CD14-positive monocyte (primary cell): ENCODE measurements at regions of chr6 and their contacts with region 1.

Region 1: DNA sequence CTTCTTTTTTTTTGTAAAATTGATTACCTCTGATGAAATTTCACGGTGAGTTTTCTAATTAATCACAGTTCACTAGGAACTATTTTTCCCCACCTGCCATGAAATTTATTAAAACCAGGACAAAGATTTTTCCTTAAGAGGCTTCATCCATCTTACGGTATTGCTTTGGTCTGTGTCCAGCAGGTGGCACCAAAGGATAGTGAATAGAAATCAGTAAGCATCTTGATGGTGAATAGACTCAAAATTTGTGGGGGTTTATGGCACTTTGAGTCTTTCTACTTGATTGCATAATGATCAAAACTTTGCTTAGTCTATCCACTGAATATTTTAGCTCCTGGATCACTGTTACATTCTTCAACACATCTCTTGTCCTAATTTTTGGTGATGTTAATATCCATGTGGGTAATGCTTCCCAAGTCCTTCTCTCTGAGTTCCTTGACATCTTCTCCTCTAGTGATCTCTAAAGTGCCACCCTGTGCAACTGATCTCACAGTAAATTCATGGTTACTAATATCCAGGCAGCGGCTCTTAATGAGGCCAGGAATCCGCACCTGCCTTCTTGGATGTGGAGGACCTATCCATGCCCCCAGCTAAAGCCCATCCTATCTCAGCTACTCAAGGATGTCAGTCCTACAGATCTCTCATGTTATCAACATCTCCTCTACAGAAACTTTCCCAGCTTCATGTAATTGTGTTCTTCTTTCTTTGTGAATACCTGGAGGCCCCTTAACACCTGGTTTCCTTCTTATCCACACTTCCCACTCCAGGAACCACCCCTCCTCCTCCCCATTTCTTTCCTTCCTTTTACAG is 54.5 kb downstream of the STMND1 start:
- DNase-seq: peak; percentile 20 to 54 (median 40)
- H3K4me3 ChIP-seq: no peak overlapping the region
- H3K4me3 Mint-ChIP-seq: no peak overlapping the region
- H3K27ac ChIP-seq: no peak overlapping the region
- H3K27ac Mint-ChIP-seq: no peak overlapping the region
- H3K4me1 ChIP-seq: no peaks in the 10 kb centered on the region
- H3K4me1 Mint-ChIP-seq: no peaks in the 10 kb centered on the region
- H3K27me3 ChIP-seq: peaks cover 0 to 2% of the 10 kb centered on the region in 2 donors
- H3K27me3 Mint-ChIP-seq: peaks cover under 1 to 6% (median 4%) of the 10 kb centered on the region in 3 donors
- CTCF ChIP-seq: peak; percentile 86

Region 2: DNA sequence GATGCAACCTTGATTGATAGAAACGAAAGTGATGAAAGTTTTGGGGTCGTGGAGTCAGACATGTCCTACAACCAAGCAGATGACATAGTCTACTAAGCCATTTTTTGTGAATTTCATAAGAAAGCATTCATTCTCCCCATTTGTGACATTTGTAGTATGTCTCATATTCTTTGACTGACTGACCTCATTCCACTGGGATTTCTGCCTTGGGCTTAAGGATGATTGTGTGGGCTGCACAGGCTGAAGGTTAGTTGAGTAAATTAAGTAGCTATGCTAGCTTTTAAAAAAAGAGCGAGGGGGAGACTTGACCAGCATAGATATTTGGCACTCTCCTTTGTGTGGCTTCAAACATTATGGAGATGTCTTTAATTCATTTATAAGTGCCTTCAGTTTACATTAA is 25.5 kb before region 1 on chr6:
- intact Hi-C with region 1: no loop called
- DNase-seq: no peak
- H3K4me3 ChIP-seq: no peak overlapping the region
- H3K4me3 Mint-ChIP-seq: peak overlapping the region in 1 of 2 donors; percentile 68
- H3K27ac ChIP-seq: no peak overlapping the region
- H3K27ac Mint-ChIP-seq: no peak overlapping the region
- H3K4me1 ChIP-seq: no peaks in the 10 kb centered on the region
- H3K4me1 Mint-ChIP-seq: no peaks in the 10 kb centered on the region
- H3K27me3 ChIP-seq: no peaks in the 10 kb centered on the region
- H3K27me3 Mint-ChIP-seq: peaks cover 0 to 9% (median 8%) of the 10 kb centered on the region in 3 donors
- CTCF ChIP-seq: no peak

Region 3: GRCh38 chr6:17193106-17193775 is 36.9 kb after region 1 on chr6:
- intact Hi-C with region 1: no loop called
- DNase-seq: no peak
- H3K4me3 ChIP-seq: no peak overlapping the region
- H3K4me3 Mint-ChIP-seq: no peak overlapping the region
- H3K27ac ChIP-seq: no peak overlapping the region
- H3K27ac Mint-ChIP-seq: no peak overlapping the region
- H3K4me1 ChIP-seq: no peaks in the 10 kb centered on the region
- H3K4me1 Mint-ChIP-seq: peaks cover 7% of the 10 kb centered on the region
- H3K27me3 ChIP-seq: no peaks in the 10 kb centered on the region
- H3K27me3 Mint-ChIP-seq: peaks cover 0 to 1% (median 0%) of the 10 kb centered on the region in 3 donors
- CTCF ChIP-seq: no peak

Region 4: DNA sequence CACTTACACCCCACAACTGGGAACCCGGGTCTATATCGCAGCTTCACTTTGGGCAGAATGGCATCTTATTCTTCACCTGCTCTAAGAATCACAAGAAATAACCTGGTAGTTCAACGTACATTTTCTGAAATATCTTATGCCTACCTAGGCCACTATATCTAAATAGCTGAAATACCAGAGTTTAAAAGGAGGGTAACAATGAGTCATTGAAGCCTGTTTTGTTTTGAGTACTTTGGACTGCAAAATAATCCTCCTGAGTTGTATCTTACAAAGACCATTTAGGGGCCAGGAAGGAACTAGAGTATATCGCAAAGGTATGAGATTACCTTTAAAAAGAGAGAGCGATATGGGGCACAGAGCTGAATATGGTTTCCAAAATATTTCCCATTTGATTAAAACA is 647.1 kb after region 1 on chr6:
- intact Hi-C with region 1: loop called in 1 of 2 experiments (anchors 5 kb)
- DNase-seq: no peak
- H3K4me3 ChIP-seq: no peak overlapping the region
- H3K4me3 Mint-ChIP-seq: no peak overlapping the region
- H3K27ac ChIP-seq: no peak overlapping the region
- H3K27ac Mint-ChIP-seq: no peak overlapping the region
- H3K4me1 ChIP-seq: no peaks in the 10 kb centered on the region
- H3K4me1 Mint-ChIP-seq: peaks cover 6% of the 10 kb centered on the region
- H3K27me3 ChIP-seq: no peaks in the 10 kb centered on the region
- H3K27me3 Mint-ChIP-seq: no peaks in the 10 kb centered on the region
- CTCF ChIP-seq: no peak

Region 5: DNA sequence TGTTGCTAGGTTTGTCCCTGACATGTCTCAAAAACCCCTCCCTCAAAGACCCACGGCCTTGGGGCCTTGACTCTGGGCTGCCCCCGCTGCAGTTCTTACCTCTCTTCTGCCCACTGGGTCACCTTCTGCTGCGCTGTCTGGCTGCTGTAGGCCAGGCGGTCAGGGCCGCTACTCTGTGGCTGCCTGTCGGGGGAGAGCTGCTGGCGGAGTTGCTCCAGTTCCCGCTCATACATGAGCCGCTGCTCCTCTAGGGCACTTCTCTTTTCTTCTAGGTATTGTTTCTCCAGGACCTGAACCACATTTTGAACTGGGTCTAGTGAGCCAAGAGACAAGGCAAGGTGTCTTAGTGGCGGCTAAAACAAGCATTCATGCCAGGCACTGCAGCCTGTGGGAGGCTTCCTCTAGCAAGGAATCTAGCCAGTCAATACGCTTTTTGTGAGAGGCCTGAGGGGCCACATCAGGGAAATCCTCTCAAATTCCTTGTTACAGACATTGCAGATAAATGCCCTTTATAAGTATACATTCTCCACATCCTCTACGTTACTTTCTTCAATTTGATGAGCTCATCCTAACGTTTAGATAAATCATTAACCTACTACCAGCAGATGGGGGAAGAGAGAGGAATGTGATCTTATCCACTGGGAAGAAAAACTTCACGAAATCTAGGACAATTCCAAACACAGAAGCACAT is 660.7 kb after region 1 on chr6:
- intact Hi-C with region 1: loop called in 1 of 2 experiments (anchors 10 kb)
- DNase-seq: no peak
- H3K4me3 ChIP-seq: no peak overlapping the region
- H3K4me3 Mint-ChIP-seq: no peak overlapping the region
- H3K27ac ChIP-seq: no peak overlapping the region
- H3K27ac Mint-ChIP-seq: no peak overlapping the region
- H3K4me1 ChIP-seq: no peaks in the 10 kb centered on the region
- H3K4me1 Mint-ChIP-seq: no peaks in the 10 kb centered on the region
- H3K27me3 ChIP-seq: no peaks in the 10 kb centered on the region
- H3K27me3 Mint-ChIP-seq: no peaks in the 10 kb centered on the region
- CTCF ChIP-seq: no peak